ENCODE measurements at regions of chr17 and their contacts with region 1.

Region 1: GRCh38 chr17:53722407-53722806 is 100.3 kb upstream of the KIF2B start:
- DNase-seq: no peak
- ATAC-seq: no peak

Region 2: DNA sequence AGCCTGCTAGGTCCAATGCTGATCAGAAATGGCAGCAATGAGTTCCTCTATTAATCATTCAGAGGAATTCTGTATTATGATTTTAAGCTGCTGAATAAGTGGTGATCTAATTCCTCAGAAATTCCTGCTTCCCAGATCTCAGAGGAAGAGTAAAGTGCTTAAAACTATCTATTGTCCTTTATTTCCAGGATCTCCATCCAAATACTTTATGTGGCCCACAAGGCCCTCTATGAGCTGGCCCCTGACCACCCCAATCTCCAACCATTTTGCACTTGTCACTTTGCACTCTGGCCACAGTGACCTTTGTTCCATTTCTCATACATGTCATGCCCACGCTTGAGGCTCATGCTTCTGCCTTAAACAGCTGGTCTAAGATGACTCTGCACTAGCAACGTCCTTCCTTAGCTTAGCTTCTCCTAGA is 1657.6 kb before region 1 on chr17:
- intact Hi-C with region 1: loop called (anchors 5 kb)
- DNase-seq: no peak
- ATAC-seq: no peak

Region 3: GRCh38 chr17:53588317-53588716 is 134.1 kb before region 1 on chr17:
- intact Hi-C with region 1: no loop called
- DNase-seq: no peak
- ATAC-seq: no peak